CD8-positive, alpha-beta T cell (primary cell): ENCODE measurements at regions of chr14 and their contacts with region 1.

Region 1: DNA sequence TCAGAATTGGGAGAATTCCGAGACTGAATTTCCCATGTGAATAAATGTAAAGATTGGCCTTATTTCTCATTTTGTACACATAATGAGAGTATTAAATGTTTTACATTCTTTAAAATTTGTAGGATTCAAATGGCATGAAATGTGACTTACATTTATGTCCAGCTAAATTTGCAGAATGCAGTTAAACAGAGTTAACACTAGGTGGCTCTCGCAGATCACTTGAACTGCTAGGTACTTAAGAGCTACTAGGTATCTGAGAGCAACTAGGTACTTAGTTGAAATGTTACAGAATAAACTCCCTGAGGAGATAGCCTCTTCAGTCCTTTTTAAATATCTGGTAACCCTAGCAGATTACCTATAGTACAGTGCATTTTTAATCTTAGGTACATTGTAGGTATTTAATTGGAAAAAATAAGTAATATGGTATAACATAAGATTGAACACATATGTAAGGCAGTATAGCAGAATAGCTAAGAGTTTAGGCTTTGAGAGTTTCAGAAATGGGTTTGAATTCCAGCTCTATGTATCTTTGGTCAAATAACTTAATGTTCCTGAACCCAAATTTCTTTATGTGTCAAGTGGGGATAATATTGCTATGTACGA is 73.8 kb downstream of the KIAA0586 start:
- DNase-seq: peak in 3 of 9 experiments; percentile 7 to 63 (median 46)
- ATAC-seq: peak; percentile 67
- H3K4me3 ChIP-seq: no peak overlapping the region
- H3K4me3 Mint-ChIP-seq: no peak overlapping the region
- H3K27ac ChIP-seq: no peak overlapping the region
- H3K27ac Mint-ChIP-seq: no peak overlapping the region
- H3K4me1 ChIP-seq: no peaks in the 10 kb centered on the region
- H3K4me1 Mint-ChIP-seq: no peaks in the 10 kb centered on the region
- H3K27me3 ChIP-seq: no peaks in the 10 kb centered on the region
- H3K27me3 Mint-ChIP-seq: no peaks in the 10 kb centered on the region
- CTCF ChIP-seq: peak; percentile 81

Region 2: GRCh38 chr14:58479975-58480374 is 21.3 kb before region 1 on chr14:
- CTCF ChIA-PET with region 1: no interaction called
- POLR2A ChIA-PET with region 1: no interaction called
- intact Hi-C with region 1: no loop called
- DNase-seq: no peak
- ATAC-seq: no peak
- H3K4me3 ChIP-seq: no peak overlapping the region
- H3K4me3 Mint-ChIP-seq: no peak overlapping the region
- H3K27ac ChIP-seq: no peak overlapping the region
- H3K27ac Mint-ChIP-seq: no peak overlapping the region
- H3K4me1 ChIP-seq: no peaks in the 10 kb centered on the region
- H3K4me1 Mint-ChIP-seq: no peaks in the 10 kb centered on the region
- H3K27me3 ChIP-seq: no peaks in the 10 kb centered on the region
- H3K27me3 Mint-ChIP-seq: no peaks in the 10 kb centered on the region
- CTCF ChIP-seq: no peak

Region 3: DNA sequence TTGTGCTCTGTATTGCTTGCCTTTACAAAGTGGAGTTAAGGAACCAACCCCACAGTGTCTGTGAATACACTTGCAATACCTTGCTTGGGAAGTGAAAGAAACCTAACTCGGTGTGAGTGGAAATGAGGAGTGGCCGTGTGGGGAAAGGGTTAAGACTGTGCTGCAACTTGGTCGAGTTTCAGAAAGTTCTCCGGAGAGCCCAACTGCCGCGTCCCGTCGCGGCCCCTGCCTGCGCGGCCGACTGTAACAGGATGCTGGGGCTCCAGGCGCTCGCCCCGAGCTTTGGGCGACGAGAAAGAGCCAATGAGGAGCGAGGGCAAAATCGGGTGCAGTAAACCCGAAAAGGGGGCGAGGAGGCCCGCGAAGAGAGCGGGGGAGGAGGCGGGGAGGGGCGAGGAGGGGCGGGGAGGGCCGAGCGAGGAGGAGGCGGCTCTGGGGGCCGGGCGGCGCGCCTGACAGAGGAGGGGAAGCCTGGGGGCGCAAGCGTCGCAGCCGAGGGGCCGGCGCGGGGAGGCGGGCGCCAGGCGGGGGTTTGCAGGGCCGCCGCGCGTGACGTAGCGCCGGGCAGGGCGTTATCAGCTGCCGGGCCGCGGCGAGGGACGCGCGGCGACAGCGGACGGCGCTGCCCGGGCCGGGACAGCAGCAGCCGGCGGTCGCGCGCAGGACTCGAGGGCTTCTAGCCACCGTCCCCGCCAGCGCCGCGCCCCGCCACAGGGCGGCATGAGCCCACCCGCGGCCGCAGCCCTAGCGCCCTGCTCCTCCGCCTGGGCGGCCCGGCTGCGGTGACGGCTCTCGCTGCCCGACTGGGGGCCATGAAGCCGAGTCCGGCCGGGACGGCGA is 136.3 kb after region 1 on chr14 and contains the start of gene DACT1:
- CTCF ChIA-PET with region 1: interaction called, 5 read pairs
- POLR2A ChIA-PET with region 1: interaction called, 3 read pairs
- intact Hi-C with region 1: loop called in 1 of 2 experiments (anchors 1 kb)
- DNase-seq: peak in 7 of 9 experiments; percentile 27 to 61 (median 35)
- ATAC-seq: peak; percentile 66
- H3K4me3 ChIP-seq: peak within 1 kb of the TSS; percentile 43 to 51
- H3K4me3 Mint-ChIP-seq: peak within 1 kb of the TSS; percentile 90
- H3K27ac ChIP-seq: no peak within 1 kb of the TSS
- H3K27ac Mint-ChIP-seq: peak within 1 kb of the TSS; percentile 2
- H3K4me1 ChIP-seq: no peaks in the 10 kb centered on the region
- H3K4me1 Mint-ChIP-seq: peaks cover 21% of the 10 kb centered on the region
- H3K27me3 ChIP-seq: peaks cover 0 to 3% of the 10 kb centered on the region in 2 experiments
- H3K27me3 Mint-ChIP-seq: peaks cover 36% of the 10 kb centered on the region
- CTCF ChIP-seq: no peak
- total RNA-seq, gene DACT1: 0.38 to 0.78 TPM

Region 4: GRCh38 chr14:59055439-59056045 is 554.2 kb after region 1 on chr14:
- CTCF ChIA-PET with region 1: interaction called, 13 read pairs
- POLR2A ChIA-PET with region 1: interaction called, 3 read pairs
- intact Hi-C with region 1: loop called in 1 of 2 experiments (anchors 1 kb)
- DNase-seq: peak in 3 of 9 experiments; percentile 14 to 41 (median 14)
- ATAC-seq: no peak
- H3K4me3 ChIP-seq: no peak overlapping the region
- H3K4me3 Mint-ChIP-seq: no peak overlapping the region
- H3K27ac ChIP-seq: no peak overlapping the region
- H3K27ac Mint-ChIP-seq: no peak overlapping the region
- H3K4me1 ChIP-seq: no peaks in the 10 kb centered on the region
- H3K4me1 Mint-ChIP-seq: no peaks in the 10 kb centered on the region
- H3K27me3 ChIP-seq: no peaks in the 10 kb centered on the region
- H3K27me3 Mint-ChIP-seq: peaks cover 7% of the 10 kb centered on the region
- CTCF ChIP-seq: peak; percentile 70

Region 5: DNA sequence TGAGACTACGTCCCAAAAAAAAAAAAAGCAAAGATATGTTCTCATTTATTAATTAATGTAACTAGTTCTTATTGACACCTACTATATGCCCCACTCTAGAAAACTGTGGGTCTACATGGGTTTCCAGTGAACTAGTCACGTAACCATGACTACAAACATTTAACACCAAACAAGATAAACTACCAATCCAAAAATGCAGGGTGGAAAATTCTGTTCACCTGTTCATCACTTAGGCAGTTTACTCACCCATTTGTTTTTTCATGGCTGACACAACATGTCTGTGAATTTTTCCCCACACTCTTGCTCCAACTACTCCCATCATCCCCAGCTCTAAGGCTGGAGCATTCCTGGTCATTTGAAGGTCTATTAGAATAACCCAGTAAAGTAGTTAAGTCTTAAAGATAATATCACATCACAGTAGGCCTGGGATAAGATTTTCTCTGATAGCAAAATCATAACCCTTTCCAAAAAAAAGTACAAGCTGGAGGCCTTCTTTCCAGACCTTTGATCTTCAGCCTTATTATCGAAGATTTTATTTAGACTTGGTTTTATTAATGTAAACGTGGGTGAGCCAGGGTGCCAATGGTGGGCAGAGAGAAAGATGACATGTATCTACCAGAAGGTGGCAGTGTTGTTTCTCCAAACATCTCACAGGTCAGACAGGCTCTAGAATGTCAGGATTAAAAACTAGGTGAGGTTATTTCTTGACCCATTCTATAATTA is 625.6 kb after region 1 on chr14:
- CTCF ChIA-PET with region 1: interaction called, 8 read pairs
- POLR2A ChIA-PET with region 1: no interaction called
- intact Hi-C with region 1: loop called (anchors 5 kb)
- DNase-seq: peak in 4 of 9 experiments; percentile 13 to 75 (median 42)
- ATAC-seq: peak; percentile 74
- H3K4me3 ChIP-seq: no peak overlapping the region
- H3K4me3 Mint-ChIP-seq: no peak overlapping the region
- H3K27ac ChIP-seq: no peak overlapping the region
- H3K27ac Mint-ChIP-seq: no peak overlapping the region
- H3K4me1 ChIP-seq: no peaks in the 10 kb centered on the region
- H3K4me1 Mint-ChIP-seq: no peaks in the 10 kb centered on the region
- H3K27me3 ChIP-seq: no peaks in the 10 kb centered on the region
- H3K27me3 Mint-ChIP-seq: peaks cover 27% of the 10 kb centered on the region
- CTCF ChIP-seq: peak; percentile 93

Region 6: DNA sequence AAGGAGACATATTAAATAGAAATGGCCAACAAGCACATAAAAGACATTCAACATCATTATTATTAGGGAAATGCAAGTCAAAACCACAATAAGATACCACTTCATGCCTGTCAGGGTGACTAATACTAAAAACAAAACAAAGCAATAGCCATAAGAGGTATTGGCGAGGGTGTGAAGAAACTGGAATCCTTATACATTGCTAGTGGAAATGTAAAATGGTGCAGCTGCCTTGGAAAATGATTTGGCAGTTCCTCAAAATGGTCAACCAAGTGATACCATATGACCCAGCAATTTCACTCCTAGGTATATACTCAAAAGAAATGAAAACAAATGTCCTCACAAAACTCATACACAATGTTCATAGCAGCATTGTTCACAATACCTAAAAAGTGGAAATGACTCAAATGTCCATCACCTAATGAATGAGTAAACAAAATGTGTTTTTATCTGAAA is 936.9 kb after region 1 on chr14:
- CTCF ChIA-PET with region 1: no interaction called
- POLR2A ChIA-PET with region 1: no interaction called
- intact Hi-C with region 1: loop called (anchors 5 kb)
- DNase-seq: no peak
- ATAC-seq: no peak
- H3K4me3 ChIP-seq: no peak overlapping the region
- H3K4me3 Mint-ChIP-seq: no peak overlapping the region
- H3K27ac ChIP-seq: no peak overlapping the region
- H3K27ac Mint-ChIP-seq: no peak overlapping the region
- H3K4me1 ChIP-seq: no peaks in the 10 kb centered on the region
- H3K4me1 Mint-ChIP-seq: no peaks in the 10 kb centered on the region
- H3K27me3 ChIP-seq: no peaks in the 10 kb centered on the region
- H3K27me3 Mint-ChIP-seq: no peaks in the 10 kb centered on the region
- CTCF ChIP-seq: no peak

Region 7: DNA sequence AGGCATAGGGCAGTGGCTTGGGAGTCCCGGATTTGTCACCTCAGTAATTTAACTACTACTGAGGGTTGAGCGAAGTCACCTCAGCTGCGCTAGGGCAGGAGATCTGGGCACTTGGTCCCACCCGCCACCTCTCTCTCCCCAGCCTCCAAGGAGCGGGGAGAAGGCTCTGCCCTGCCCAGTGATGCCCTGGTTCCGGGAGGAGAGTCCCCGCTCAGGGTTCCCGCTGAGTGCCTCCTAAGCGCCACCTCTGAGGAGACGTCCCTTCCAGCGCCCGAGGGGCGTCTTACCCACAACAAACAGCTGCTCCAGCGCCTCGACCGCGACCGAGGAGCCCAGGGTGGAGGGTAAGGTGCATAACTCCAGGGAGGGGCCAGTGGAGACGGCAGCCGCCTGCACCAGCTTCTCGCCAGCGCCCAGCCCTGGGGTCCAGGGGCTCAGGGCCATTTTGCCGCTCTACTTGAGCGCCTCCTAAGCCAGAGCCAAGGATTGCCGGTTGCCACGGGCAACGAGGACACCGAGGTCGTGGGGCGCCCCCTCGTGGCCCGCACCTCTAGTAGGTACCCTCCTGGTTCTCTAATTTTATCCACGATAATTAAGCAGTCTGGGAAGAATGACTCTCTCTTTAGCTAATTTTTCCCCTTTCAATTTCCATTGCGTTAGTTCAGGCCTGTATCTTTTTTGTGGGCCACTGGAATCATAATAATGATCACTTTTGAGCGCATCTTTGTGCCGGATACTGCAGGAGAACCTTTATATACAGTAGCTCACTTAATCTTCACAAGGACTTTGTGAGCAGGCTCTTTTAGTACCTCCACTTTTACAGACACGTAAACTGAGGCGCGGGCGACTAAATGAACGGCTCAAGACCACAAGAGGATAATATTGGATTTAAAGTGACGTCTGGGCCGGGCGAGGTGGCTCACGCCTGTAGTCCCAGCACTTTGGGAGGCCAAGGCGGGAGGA is 1075.3 kb after region 1 on chr14 and contains the start of gene CCDC175:
- CTCF ChIA-PET with region 1: no interaction called
- POLR2A ChIA-PET with region 1: no interaction called
- intact Hi-C with region 1: loop called in 1 of 2 experiments (anchors 5 kb)
- DNase-seq: peak; percentile 50 to 89 (median 82)
- ATAC-seq: peak; percentile 98
- H3K4me3 ChIP-seq: peak within 1 kb of the TSS; percentile 55 to 58
- H3K4me3 Mint-ChIP-seq: peak within 1 kb of the TSS; percentile 72
- H3K27ac ChIP-seq: no peak within 1 kb of the TSS
- H3K27ac Mint-ChIP-seq: no peak within 1 kb of the TSS
- H3K4me1 ChIP-seq: peaks cover 9% of the 10 kb centered on the region
- H3K4me1 Mint-ChIP-seq: peaks cover 10% of the 10 kb centered on the region
- H3K27me3 ChIP-seq: peaks cover 0 to 4% of the 10 kb centered on the region in 2 experiments
- H3K27me3 Mint-ChIP-seq: peaks cover 27% of the 10 kb centered on the region
- CTCF ChIP-seq: peak; percentile 85
- total RNA-seq, gene CCDC175: not detected